ENCODE measurements at regions of chrX and their contacts with region 1.

Region 1: DNA sequence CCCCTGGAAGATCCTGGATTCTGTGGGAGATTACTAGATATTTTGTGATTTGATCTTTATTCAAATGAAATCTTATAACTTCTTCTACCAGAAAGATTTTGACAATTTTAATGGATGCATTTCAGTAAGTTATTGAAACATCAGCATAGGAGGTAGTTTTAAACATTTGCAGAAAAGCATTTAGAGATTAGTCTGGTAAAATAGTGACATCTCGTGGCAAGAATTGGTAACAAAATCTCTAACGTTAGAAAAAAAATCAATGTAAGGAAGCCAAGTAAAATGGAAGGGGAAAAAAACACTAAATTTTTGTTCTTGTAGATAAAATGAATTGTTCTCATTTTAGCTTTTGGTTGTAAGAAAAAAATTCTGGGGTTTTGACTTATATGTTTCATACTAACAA is 73.3 kb downstream of the TASL start:
- DNase-seq: no peak
- H3K4me3 Mint-ChIP-seq: no peak overlapping the region
- H3K27ac Mint-ChIP-seq: no peak overlapping the region
- H3K4me1 Mint-ChIP-seq: no peaks in the 10 kb centered on the region
- H3K27me3 Mint-ChIP-seq: peaks cover 2% of the 10 kb centered on the region

Region 2: DNA sequence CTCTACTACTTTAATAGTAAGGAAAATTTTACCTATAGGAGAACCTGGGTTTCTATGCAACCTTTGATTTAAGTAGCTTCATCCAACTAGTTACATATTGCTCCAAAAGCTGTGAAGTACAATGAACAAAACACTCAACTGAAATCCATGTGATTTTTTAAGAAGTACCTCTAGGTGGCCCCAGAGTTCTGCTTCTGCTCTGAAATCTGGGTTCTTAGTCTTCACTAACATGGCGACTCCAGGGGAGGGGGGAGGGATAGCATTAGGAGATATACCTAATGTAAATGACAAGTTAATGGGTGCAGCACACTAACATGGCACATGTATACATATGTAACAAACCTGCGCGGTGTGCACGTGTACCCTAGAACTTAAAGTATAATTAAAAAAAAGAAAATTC is 362.3 kb before region 1 on chrX:
- CTCF ChIA-PET with region 1: no interaction called
- POLR2A ChIA-PET with region 1: no interaction called
- intact Hi-C with region 1: loop called (anchors 5 kb)
- DNase-seq: no peak
- H3K4me3 Mint-ChIP-seq: no peak overlapping the region
- H3K27ac Mint-ChIP-seq: no peak overlapping the region
- H3K4me1 Mint-ChIP-seq: no peaks in the 10 kb centered on the region
- H3K27me3 Mint-ChIP-seq: no peaks in the 10 kb centered on the region